Heart right ventricle (tissue), 16 donors: ENCODE measurements at regions of chr2 and their contacts with region 1.

Region 1: DNA sequence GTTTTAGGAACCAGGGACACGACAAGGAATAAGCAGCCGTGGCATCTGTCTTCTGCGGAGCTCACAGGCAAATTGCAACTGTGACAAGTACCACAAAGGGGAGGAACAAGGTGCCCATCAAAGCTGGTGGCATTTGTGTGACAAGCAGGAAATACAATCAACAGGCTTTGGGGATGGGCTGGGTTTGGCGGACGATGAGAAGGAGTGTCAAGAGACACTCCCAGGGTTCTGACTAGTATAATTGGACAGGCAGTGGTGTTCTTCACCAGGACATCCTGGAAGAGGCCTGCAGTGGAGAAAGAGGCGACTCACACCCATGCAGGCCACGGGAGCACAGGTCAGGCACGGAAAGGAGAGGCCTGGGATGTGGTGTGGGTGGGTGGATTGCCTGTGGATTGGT is 14.2 kb upstream of the SPATA3 start:
- DNase-seq: no peak
- ATAC-seq: no peak
- H3K4me3 ChIP-seq: no peak overlapping the region
- H3K27ac ChIP-seq: no peak overlapping the region
- H3K4me1 ChIP-seq: peaks cover 0 to 1% (median 0%) of the 10 kb centered on the region in 9 donors
- H3K27me3 ChIP-seq: peaks cover 0 to 26% (median 7%) of the 10 kb centered on the region in 7 donors
- CTCF ChIP-seq: no peak

Region 2: GRCh38 chr2:230602562-230603230 is 379.0 kb before region 1 on chr2:
- intact Hi-C with region 1: loop called in 1 of 10 experiments (anchors 5 kb)
- DNase-seq: no peak
- ATAC-seq: peak in 2 of 8 donors; percentile 26 to 42
- H3K4me3 ChIP-seq: no peak overlapping the region
- H3K27ac ChIP-seq: peak overlapping the region in 1 of 10 donors; percentile 74
- H3K4me1 ChIP-seq: peaks cover 0 to 16% (median 0%) of the 10 kb centered on the region in 9 donors
- H3K27me3 ChIP-seq: peaks cover 0 to 5% (median 0%) of the 10 kb centered on the region in 7 donors
- CTCF ChIP-seq: no peak

Region 3: GRCh38 chr2:230619466-230619865 is 362.2 kb before region 1 on chr2:
- intact Hi-C with region 1: no loop called
- DNase-seq: no peak
- ATAC-seq: no peak
- H3K4me3 ChIP-seq: no peak overlapping the region
- H3K27ac ChIP-seq: no peak overlapping the region
- H3K4me1 ChIP-seq: no peaks in the 10 kb centered on the region
- H3K27me3 ChIP-seq: peaks cover 0 to 3% (median 0%) of the 10 kb centered on the region in 7 donors
- CTCF ChIP-seq: no peak

Region 4: GRCh38 chr2:230902180-230902899 is 79.4 kb before region 1 on chr2:
- intact Hi-C with region 1: loop called in 8 of 10 experiments (anchors 2 to 10 kb)
- DNase-seq: no peak
- ATAC-seq: peak in 4 of 8 donors; percentile 52 to 72 (median 64)
- H3K4me3 ChIP-seq: no peak overlapping the region
- H3K27ac ChIP-seq: no peak overlapping the region
- H3K4me1 ChIP-seq: peaks cover 0 to 11% (median 0%) of the 10 kb centered on the region in 9 donors
- H3K27me3 ChIP-seq: peaks cover 0 to 20% (median 0%) of the 10 kb centered on the region in 7 donors
- CTCF ChIP-seq: peak in 8 of 9 donors; percentile 41 to 95 (median 68)

Region 5: DNA sequence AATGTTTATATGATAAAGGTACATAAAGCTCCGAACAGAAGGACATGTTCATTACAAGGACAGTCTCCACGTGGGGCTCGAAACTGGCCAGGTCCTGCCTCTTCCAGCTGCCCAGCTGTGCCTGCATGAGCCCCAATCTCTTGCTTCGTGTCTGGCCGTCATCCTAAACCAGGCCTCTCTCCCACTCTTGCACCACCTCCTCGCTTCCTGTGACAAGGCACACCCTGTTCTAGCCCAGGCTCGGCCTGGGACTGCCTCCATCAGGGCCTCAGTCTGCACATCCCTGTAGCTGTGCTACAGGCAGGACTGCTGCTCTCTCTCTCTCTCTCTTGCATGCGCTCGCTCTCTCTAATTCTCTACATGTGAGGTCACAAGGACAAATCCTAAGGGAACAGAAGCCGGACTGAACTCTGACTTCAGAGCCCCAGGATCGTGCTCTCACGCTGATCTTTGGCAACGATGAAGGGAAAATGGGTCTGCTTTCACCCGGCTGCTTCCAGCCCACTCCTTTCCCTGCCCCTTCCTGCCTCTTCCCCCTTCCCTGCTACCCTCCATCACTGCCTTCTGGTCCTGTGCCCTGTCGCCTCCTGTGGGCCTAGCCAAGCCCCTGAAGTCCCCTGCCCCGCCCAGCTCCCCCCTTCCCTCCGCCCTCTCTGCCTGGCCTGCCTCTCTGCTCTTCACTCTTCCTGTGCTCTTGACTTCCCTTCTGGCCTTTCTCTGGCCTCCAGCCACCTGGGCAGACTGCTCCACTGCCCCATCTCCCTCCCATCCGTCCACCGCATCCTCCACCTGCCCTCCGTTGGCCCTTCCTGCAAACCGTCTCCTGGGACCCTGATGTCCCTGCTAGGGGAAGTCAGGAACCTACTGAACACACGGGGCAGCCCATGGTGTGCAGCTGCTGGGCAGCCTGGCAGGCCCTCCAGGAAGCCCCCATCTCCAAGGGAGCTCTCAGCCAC is 48.9 kb before region 1 on chr2:
- intact Hi-C with region 1: no loop called
- DNase-seq: peak; percentile 53 to 67
- ATAC-seq: peak; percentile 80 to 96 (median 94)
- H3K4me3 ChIP-seq: no peak overlapping the region
- H3K27ac ChIP-seq: peak overlapping the region in 9 of 10 donors; percentile 6 to 67 (median 31)
- H3K4me1 ChIP-seq: peaks cover 5 to 22% (median 16%) of the 10 kb centered on the region in 9 donors
- H3K27me3 ChIP-seq: peaks cover 0 to 14% (median 0%) of the 10 kb centered on the region in 7 donors
- CTCF ChIP-seq: no peak

Region 6: GRCh38 chr2:231084565-231084964 is 102.9 kb after region 1 on chr2:
- intact Hi-C with region 1: no loop called
- DNase-seq: no peak
- ATAC-seq: no peak
- H3K4me3 ChIP-seq: no peak overlapping the region
- H3K27ac ChIP-seq: no peak overlapping the region
- H3K4me1 ChIP-seq: no peaks in the 10 kb centered on the region
- H3K27me3 ChIP-seq: no peaks in the 10 kb centered on the region
- CTCF ChIP-seq: no peak

Region 7: DNA sequence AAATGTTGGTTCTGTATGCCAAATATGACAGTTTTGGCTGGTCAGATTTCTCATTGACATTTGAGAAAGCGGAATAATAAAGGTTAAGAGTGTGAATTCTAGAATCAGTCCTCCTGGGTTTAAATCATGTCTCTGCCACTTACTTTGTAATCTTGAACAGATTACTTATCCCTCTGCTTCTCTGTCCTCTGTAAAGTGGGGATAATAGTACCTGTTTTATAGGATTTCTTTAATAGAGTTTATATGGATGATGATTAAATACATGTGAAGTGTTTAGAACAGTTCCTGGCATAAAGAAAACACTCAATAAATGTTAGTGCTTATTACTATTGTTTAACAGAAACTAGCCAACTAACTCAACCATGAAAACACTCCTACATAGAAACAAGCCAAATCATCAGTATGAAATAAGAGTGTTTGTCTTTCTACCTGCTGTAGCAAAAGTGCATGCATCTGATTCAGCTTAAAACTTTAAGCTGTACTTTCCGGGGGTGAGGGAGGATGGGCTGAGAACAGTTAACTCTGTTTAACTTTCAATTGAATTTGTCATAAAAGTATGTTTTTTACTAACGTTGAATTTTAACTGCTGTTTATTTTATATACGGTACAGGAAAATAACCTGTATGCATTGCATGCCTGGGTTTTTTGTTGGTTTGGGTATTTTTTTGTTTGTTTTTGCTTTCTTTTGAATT is 136.4 kb after region 1 on chr2:
- intact Hi-C with region 1: no loop called
- DNase-seq: no peak
- ATAC-seq: no peak
- H3K4me3 ChIP-seq: peak overlapping the region in 2 of 10 donors; percentile 8
- H3K27ac ChIP-seq: peak overlapping the region in 1 of 10 donors; percentile 2
- H3K4me1 ChIP-seq: peaks cover 0 to 12% (median 4%) of the 10 kb centered on the region in 9 donors
- H3K27me3 ChIP-seq: no peaks in the 10 kb centered on the region
- CTCF ChIP-seq: no peak